AG04449 (cell line): ENCODE measurements at regions of chr7 and their contacts with region 1.

Region 1: DNA sequence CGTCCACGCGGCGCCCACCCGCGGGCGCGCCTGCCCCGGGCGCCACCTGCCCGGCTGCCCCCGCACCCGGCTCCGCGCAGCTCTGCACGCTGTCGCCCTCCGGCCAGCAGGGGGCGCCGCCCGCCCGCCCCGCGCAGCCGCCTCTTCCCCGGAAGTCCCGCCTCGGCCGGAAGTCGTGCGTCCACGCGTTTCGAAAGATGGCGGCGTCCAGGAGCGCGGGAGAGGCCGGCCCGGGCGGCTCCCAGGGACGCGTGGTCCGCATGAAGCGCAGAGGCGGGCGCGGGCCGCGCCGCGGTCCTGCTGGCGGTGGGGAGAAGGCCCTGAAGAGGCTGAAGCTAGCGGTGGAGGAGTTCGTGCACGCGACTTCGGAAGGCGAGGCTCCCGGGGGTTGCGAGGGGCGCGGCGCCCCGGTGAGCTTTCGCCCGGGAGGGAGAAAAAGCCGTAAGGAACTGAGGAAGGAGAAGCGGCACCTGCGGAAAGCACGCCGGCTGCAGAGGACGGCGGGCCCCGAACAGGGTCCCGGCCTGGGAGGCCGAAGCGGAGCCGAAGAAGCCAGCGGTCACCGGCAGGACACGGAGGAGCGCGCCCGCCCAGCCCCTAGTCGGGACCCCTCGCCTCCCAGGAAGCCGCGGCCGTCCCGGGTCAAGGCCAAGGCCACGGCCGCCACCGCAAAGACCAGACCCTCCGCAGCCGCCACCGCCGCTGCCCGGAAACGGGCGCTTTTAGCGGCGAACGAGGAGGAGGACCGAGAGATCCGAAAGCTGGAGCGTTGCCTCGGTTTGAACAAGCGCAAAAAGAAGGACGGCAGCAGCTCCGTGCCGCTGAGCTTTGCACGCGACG is at the start of gene NOM1:
- DNase-seq: peak; percentile 3
- H3K4me3 ChIP-seq: peak within 1 kb of the TSS; percentile 78
- CTCF ChIP-seq: peak; percentile 69

Region 2: GRCh38 chr7:156589808-156590207 is 360.0 kb before region 1 on chr7:
- CTCF ChIA-PET with region 1: no interaction called
- POLR2A ChIA-PET with region 1: no interaction called
- DNase-seq: no peak
- H3K4me3 ChIP-seq: no peak overlapping the region
- CTCF ChIP-seq: no peak

Region 3: GRCh38 chr7:156792611-156793010 is 157.2 kb before region 1 on chr7:
- CTCF ChIA-PET with region 1: no interaction called
- POLR2A ChIA-PET with region 1: no interaction called
- DNase-seq: no peak
- H3K4me3 ChIP-seq: no peak overlapping the region
- CTCF ChIP-seq: no peak

Region 4: GRCh38 chr7:156892821-156893706 is 56.7 kb before region 1 on chr7 and contains the start of gene LMBR1:
- CTCF ChIA-PET with region 1: interaction called, 11 read pairs
- POLR2A ChIA-PET with region 1: no interaction called
- DNase-seq: peak; percentile 46
- H3K4me3 ChIP-seq: peak within 1 kb of the TSS; percentile 87
- CTCF ChIP-seq: peak; percentile 33

Region 5: DNA sequence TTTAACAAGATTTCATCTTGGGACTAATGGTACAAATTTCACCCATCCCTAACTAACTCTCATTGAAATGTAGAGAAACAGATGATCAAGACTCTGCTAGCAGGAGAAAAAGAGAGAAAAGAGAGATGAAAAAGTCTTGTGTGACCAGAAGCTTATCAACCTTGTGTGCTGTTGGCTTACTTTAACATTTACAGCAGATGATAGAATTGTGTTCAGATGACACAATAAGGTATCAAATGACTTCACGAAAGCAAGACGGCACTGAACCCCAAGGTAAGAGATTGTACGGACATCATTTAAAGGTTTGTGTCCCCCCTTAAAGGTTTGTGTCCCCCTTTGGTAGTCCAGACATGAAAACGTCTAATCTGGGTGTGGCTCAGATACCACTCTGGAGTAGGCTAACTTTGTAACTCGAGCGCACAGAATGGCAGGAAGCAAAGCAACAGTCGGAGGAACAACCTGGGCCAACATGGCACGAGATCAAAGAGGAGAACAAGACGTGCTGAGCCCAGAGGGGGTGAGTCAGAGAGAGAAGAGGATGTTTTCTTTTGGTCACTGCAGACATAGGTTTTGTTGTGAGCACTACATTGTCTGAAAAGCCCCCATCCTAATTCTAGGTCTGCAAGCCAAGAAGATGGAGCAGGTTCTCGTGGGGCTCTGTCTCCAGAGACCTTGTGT is 46.4 kb before region 1 on chr7:
- CTCF ChIA-PET with region 1: interaction called, 10 read pairs
- POLR2A ChIA-PET with region 1: no interaction called
- DNase-seq: no peak
- H3K4me3 ChIP-seq: no peak overlapping the region
- CTCF ChIP-seq: no peak

Region 6: GRCh38 chr7:156931957-156932381 is 17.8 kb before region 1 on chr7:
- CTCF ChIA-PET with region 1: interaction called, 16 read pairs
- POLR2A ChIA-PET with region 1: no interaction called
- DNase-seq: no peak
- H3K4me3 ChIP-seq: no peak overlapping the region
- CTCF ChIP-seq: no peak

Region 7: GRCh38 chr7:156964971-156965370 is 15.2 kb after region 1 on chr7:
- CTCF ChIA-PET with region 1: interaction called, 75 read pairs
- POLR2A ChIA-PET with region 1: no interaction called
- DNase-seq: no peak
- H3K4me3 ChIP-seq: no peak overlapping the region
- CTCF ChIP-seq: no peak

Region 8: GRCh38 chr7:156969972-156970420 is 20.2 kb after region 1 on chr7:
- CTCF ChIA-PET with region 1: interaction called, 75 read pairs
- POLR2A ChIA-PET with region 1: no interaction called
- DNase-seq: no peak
- H3K4me3 ChIP-seq: no peak overlapping the region
- CTCF ChIP-seq: no peak